IMR-90 (cell line): ENCODE measurements at regions of chr11 and their contacts with region 1.

Region 1: GRCh38 chr11:75328426-75329277 is 22.8 kb downstream of the ARRB1 start:
- DNase-seq: peak; percentile 81
- ATAC-seq: peak; percentile 75
- H3K4me3 ChIP-seq: no peak overlapping the region
- H3K27ac ChIP-seq: peak overlapping the region; percentile 89; the same call in 1 of the 2 replicates
- H3K4me1 ChIP-seq: peaks cover 29% of the 10 kb centered on the region
- H3K27me3 ChIP-seq: no peaks in the 10 kb centered on the region
- CTCF ChIP-seq: peak; percentile 88
- POLR2A ChIP-seq: 0 out of 2 replicates have a peak, but pooled peaks have one; percentile 39
- RAD21 ChIP-seq: peak; percentile 94

Region 2: DNA sequence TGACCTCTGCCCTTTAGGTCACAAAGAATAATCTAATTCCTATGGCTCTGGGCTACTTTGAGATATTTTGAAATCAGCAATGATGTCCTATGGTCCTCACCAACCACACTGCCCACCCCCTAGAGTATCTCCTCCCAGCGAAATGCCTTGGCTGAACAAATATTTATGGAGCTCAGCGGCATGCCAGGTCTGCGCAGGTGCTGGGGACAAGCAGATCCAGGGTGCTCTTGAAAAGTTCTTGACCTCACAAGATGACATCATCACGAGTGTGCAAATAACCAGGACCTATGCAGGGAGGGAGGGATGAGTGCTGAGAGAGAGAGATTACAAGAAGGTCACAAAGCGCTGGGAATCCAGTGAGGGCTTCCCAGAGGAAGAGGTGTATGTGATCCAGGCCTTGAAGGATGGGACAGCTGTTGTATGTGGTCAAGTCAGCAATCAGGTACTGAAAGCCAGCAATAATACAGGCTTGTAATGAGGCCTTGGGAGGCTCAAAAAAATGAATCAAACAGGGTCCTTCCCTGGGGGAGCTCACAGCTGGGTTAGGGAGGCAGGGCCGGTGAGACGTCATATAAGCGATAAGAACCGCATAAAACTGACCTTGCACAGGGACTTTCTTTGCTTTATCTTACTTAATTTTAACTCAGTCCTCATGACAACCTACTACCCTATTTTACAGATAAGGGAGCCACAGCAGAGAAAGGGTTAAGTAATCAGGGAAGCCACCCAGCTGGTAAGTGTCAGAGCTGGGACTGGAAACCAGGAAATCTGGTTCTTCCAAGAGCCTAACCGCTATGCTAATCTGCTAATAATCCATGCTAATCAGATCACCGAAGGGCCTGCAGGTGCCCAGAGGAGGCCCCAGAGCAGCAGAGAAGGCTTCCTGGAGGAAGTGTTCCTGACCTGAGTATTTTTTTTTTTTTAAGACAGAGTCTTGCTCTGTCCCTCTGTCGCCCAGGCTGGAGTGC is 14.5 kb after region 1 on chr11:
- CTCF ChIA-PET with region 1: interaction called, 13 read pairs
- POLR2A ChIA-PET with region 1: no interaction called
- dilution Hi-C with region 1: no loop called
- in situ Hi-C with region 1: no loop called
- intact Hi-C with region 1: no loop called
- DNase-seq: peak; percentile 65
- ATAC-seq: no peak
- H3K4me3 ChIP-seq: no peak overlapping the region
- H3K27ac ChIP-seq: no peak overlapping the region
- H3K4me1 ChIP-seq: peaks cover 50% of the 10 kb centered on the region
- H3K27me3 ChIP-seq: no peaks in the 10 kb centered on the region
- CTCF ChIP-seq: no peak
- POLR2A ChIP-seq: no peak
- RAD21 ChIP-seq: no peak

Region 3: GRCh38 chr11:75388386-75389275 is 60.0 kb after region 1 on chr11:
- CTCF ChIA-PET with region 1: interaction called, 9 read pairs
- POLR2A ChIA-PET with region 1: no interaction called
- dilution Hi-C with region 1: no loop called
- in situ Hi-C with region 1: loop called (anchors 5 kb)
- intact Hi-C with region 1: loop called (anchors 1 kb)
- DNase-seq: peak; percentile 81
- ATAC-seq: peak; percentile 91
- H3K4me3 ChIP-seq: no peak overlapping the region
- H3K27ac ChIP-seq: no peak overlapping the region
- H3K4me1 ChIP-seq: peaks cover 4% of the 10 kb centered on the region
- H3K27me3 ChIP-seq: peaks cover 4% of the 10 kb centered on the region
- CTCF ChIP-seq: peak; percentile 93
- POLR2A ChIP-seq: no peak
- RAD21 ChIP-seq: peak; percentile 91